Heart right ventricle (tissue), 16 donors: ENCODE measurements at regions of chr12 and their contacts with region 1.

Region 1: GRCh38 chr12:57514720-57515467 is 5.4 kb downstream of the DDIT3 start:
- DNase-seq: no peak
- ATAC-seq: no peak
- H3K4me3 ChIP-seq: no peak overlapping the region
- H3K27ac ChIP-seq: peak overlapping the region in 1 of 10 donors; percentile 33
- H3K4me1 ChIP-seq: peaks cover 8 to 52% (median 34%) of the 10 kb centered on the region in 9 donors
- H3K27me3 ChIP-seq: no peaks in the 10 kb centered on the region
- CTCF ChIP-seq: no peak

Region 2: DNA sequence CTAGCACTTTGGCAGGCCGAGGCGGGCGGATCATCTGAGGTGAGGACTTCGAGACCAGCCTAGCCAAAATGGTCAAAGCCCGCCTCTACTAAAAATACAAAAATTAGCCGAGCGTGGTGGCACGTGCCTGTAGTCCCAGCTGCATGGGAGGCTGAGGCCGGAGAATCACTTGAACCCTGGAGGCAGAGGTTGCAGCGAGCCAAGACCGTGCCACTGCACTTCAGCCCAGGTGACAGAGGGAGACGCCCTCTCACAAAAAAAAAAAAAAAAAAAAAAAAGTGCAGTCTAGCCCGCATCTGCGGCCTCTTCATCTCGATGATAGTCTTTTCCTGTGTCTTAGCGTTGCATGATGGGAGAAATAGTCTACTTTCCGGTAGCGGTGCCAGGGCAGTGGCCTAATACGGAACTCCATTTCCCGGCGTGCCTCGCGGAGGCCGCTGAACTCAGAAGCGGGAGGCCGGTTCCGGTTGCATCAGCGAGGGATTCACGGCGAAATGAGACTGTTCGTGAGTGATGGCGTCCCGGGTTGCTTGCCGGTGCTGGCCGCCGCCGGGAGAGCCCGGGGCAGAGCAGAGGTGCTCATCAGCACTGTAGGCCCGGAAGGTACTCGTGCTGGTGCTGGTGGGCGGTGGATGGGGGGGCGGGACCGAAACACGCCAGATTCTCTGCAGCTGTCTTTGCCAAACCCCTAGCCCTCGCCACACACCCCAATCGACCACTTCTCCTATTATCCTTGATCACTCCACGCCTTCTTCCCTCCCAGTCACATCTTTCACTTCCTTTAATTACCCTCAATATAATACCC is 27.1 kb before region 1 on chr12 and contains the start of gene MARS1:
- intact Hi-C with region 1: loop called in 2 of 10 experiments (anchors 1 to 2 kb)
- DNase-seq: peak; percentile 90 to 95
- ATAC-seq: peak; percentile 95 to 99 (median 99)
- H3K4me3 ChIP-seq: peak within 1 kb of the TSS; percentile 67 to 96 (median 84)
- H3K27ac ChIP-seq: peak within 1 kb of the TSS in 9 of 10 donors; percentile 36 to 90 (median 73)
- H3K4me1 ChIP-seq: peaks cover 9 to 21% (median 13%) of the 10 kb centered on the region in 9 donors
- H3K27me3 ChIP-seq: no peaks in the 10 kb centered on the region
- CTCF ChIP-seq: peak in 2 of 9 donors; percentile 11 to 26
- total RNA-seq, gene MARS1: 56.7 to 105 (median 72.5) TPM

Region 3: GRCh38 chr12:57539134-57539768 is 24.4 kb after region 1 on chr12:
- intact Hi-C with region 1: no loop called
- DNase-seq: no peak
- ATAC-seq: no peak
- H3K4me3 ChIP-seq: no peak overlapping the region
- H3K27ac ChIP-seq: no peak overlapping the region
- H3K4me1 ChIP-seq: peaks cover 0 to 10% (median 8%) of the 10 kb centered on the region in 9 donors
- H3K27me3 ChIP-seq: no peaks in the 10 kb centered on the region
- CTCF ChIP-seq: no peak